ENCODE measurements at regions of chr3 and their contacts with region 1.

Region 1: DNA sequence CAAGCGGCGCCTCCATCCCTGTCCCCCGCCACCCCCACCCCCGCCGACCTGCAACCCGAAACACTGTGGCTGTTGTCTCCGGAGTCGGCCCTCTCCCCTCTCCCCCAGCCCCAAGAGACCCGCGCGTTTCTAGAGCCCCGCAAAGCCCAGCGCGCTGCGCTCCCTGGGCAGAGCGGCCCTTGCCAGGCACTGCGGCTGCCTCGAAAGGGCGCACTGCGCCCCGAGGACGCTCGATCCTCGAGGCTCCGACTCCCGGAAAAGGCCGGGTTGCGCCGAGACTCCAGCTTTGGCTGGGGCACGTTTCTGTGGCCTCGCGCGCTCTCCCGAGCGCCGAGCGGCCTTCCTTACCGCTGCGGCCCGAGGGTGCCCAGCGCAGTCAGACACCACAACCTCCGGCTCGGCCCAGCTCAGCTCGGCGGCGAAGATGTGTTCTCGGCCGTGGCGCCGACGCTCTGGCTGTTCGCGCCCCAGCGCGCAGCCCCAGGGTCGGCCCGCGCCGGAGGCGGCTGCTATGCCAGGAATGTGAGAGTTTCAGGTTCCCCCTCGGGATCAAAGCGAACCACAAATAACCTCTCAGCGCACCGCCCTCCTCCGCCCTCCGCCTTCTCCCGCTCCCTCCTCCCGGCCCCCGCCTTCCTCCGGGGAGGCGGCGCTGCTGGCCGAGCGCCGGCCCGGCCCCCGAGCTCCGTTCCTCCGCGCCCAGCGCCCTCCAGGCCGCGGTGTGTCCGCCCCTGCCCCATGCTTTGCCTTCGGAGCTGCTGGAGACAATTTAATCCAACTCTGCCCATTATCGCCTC is at the start of gene AMOTL2:
- DNase-seq: peak; percentile 91
- ATAC-seq: peak; percentile 84
- total RNA-seq, gene AMOTL2: 61.9 TPM

Region 2: DNA sequence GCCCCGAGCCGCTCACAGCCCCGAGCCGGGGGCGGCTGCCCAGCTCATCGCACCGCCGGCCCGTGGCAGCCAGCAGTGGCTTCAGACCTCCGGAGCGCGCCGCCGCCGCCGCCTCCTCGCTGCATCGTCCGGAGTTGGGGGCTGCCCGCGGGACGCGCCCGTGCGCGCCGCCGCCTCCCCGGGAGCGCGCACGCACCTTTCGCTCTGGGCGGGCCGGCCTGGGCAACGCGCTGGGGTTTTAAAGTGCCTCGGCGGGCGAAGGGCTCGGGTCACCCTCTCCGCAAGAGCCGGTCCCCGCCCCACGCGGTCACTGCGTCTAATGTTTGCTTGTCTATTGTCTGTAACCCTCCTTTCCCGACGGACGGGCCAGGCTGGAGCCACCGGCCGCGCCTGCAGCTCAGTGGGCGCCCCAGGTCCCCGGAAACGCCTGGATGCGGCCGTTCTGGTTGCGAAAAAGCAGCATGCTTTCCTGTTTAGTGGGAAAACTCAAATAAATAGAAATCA is 123.4 kb before region 1 on chr3 and contains the start of gene RYK:
- intact Hi-C with region 1: loop called (anchors 5 kb)
- DNase-seq: peak; percentile 92
- ATAC-seq: peak; percentile 96
- total RNA-seq, gene RYK: 40.6 TPM

Region 3: GRCh38 chr3:134267996-134268395 is 106.2 kb before region 1 on chr3:
- intact Hi-C with region 1: no loop called
- DNase-seq: no peak
- ATAC-seq: no peak

Region 4: GRCh38 chr3:134308350-134308891 is 65.8 kb before region 1 on chr3:
- intact Hi-C with region 1: loop called (anchors 1 kb)
- DNase-seq: no peak
- ATAC-seq: peak; percentile 68

Region 5: GRCh38 chr3:134473868-134474546 is 99.8 kb after region 1 on chr3:
- intact Hi-C with region 1: loop called (anchors 2 kb)
- DNase-seq: peak; percentile 45
- ATAC-seq: peak; percentile 33

Measured in Right ventricle myocardium inferior (tissue), 1 donor.